WTC11 (cell line): ENCODE measurements at regions of chr11 and their contacts with region 1.

Region 1: GRCh38 chr11:92941676-92942571 is 27.5 kb upstream of the MTNR1B start:
- DNase-seq: no peak
- ATAC-seq: peak; percentile 91
- H3K4me3 Mint-ChIP-seq: no peak overlapping the region
- H3K27ac Mint-ChIP-seq: no peak overlapping the region
- H3K4me1 Mint-ChIP-seq: peaks cover 6% of the 10 kb centered on the region
- H3K27me3 Mint-ChIP-seq: no peaks in the 10 kb centered on the region
- CTCF ChIP-seq: peak; percentile 72

Region 2: DNA sequence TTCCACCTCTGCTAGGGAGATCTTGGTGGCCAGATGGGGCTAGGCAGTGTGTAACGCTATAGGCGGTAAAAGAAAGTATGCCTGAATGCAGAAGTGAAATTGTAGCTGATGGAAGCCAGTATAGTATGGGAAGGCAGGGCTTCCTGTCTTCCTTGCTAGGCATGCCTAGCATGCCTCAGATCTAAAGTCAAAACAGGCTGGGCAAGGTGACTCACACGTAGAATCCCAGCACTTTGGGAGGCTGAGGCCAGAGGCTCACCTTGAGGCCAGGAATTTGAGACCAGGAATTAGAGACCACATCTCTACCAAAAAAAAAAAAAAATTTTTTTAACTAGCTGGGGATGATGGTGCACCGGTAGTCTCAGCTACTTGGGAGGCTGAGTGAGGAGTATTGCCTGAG is 254.2 kb before region 1 on chr11:
- CTCF ChIA-PET with region 1: no interaction called
- POLR2A ChIA-PET with region 1: no interaction called
- DNase-seq: no peak
- ATAC-seq: no peak
- H3K4me3 Mint-ChIP-seq: no peak overlapping the region
- H3K27ac Mint-ChIP-seq: no peak overlapping the region
- H3K4me1 Mint-ChIP-seq: 0 out of 2 replicates have a peak, but pooled peaks cover 2% of the 10 kb centered on the region
- H3K27me3 Mint-ChIP-seq: no peaks in the 10 kb centered on the region
- CTCF ChIP-seq: no peak

Region 3: GRCh38 chr11:92969634-92970347 is 27.9 kb after region 1 on chr11 and contains the start of gene MTNR1B:
- CTCF ChIA-PET with region 1: interaction called, 16 read pairs
- POLR2A ChIA-PET with region 1: no interaction called
- DNase-seq: peak; percentile 20
- ATAC-seq: peak; percentile 89
- H3K4me3 Mint-ChIP-seq: peak within 1 kb of the TSS; percentile 78
- H3K27ac Mint-ChIP-seq: no peak within 1 kb of the TSS
- H3K4me1 Mint-ChIP-seq: peaks cover 4% of the 10 kb centered on the region; the same call in 1 of the 2 replicates
- H3K27me3 Mint-ChIP-seq: peaks cover 59% of the 10 kb centered on the region
- CTCF ChIP-seq: no peak
- total RNA-seq, gene MTNR1B: not detected in 3 replicates

Region 4: GRCh38 chr11:93113824-93114223 is 171.9 kb after region 1 on chr11:
- CTCF ChIA-PET with region 1: interaction called, 20 read pairs
- POLR2A ChIA-PET with region 1: no interaction called
- DNase-seq: peak; percentile 17
- ATAC-seq: peak; percentile 61
- H3K4me3 Mint-ChIP-seq: no peak overlapping the region
- H3K27ac Mint-ChIP-seq: peak overlapping the region; percentile 24; the same call in 1 of the 2 replicates
- H3K4me1 Mint-ChIP-seq: peaks cover 70% of the 10 kb centered on the region
- H3K27me3 Mint-ChIP-seq: peaks cover 2% of the 10 kb centered on the region; the same call in 1 of the 2 replicates
- CTCF ChIP-seq: no peak

Region 5: DNA sequence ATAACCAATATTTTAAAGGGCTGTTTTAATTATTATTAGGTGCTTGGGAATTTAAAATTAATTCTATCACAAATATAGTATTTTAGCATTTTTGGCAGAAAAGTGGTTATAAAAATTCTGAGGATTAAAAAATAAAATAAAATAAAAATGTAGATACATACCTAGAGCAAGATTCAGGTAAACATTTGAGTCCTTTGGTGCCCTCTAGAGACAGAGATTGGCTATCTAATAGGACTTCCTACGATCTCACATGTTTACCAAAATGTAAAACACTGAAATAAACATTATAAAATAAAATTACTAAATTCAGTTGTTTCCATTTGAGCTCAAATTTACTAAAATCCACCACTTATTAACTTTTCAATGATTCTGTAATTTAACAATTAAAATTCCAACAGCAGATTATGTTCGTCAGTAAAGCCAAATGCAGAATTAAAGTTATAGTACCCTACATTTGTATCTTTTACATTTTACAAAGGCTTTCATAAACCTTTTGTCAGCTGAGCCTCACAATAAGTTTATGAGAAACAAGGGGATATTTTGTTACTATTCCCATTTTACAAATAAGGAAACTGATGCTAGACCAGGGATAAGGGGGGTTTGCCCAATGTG is 228.1 kb after region 1 on chr11:
- CTCF ChIA-PET with region 1: interaction called, 13 read pairs
- POLR2A ChIA-PET with region 1: no interaction called
- DNase-seq: no peak
- ATAC-seq: no peak
- H3K4me3 Mint-ChIP-seq: no peak overlapping the region
- H3K27ac Mint-ChIP-seq: no peak overlapping the region
- H3K4me1 Mint-ChIP-seq: no peaks in the 10 kb centered on the region
- H3K27me3 Mint-ChIP-seq: no peaks in the 10 kb centered on the region
- CTCF ChIP-seq: peak; percentile 27; the same call in 1 of the 2 replicates